HepG2 (cell line): ENCODE measurements at regions of chr2 and their contacts with region 1.

Region 1: GRCh38 chr2:95022309-95023221 is 2.9 kb upstream of the MAL start:
- DNase-seq: peak; percentile 53
- ATAC-seq: peak; percentile 91
- H3K4me3 ChIP-seq: no peak overlapping the region
- H3K27ac ChIP-seq: no peak overlapping the region
- H3K4me1 ChIP-seq: peaks cover 5% of the 10 kb centered on the region; the same call in 1 of the 2 replicates
- H3K27me3 ChIP-seq: peaks cover 26 to 88% of the 10 kb centered on the region in 2 experiments; a peak in 4 of 5 replicates
- CTCF ChIP-seq: peak; percentile 97
- EP300 ChIP-seq: no peak
- POLR2A ChIP-seq: no peak
- RAD21 ChIP-seq: peak; percentile 83

Region 2: GRCh38 chr2:95053543-95053942 is 31.0 kb after region 1 on chr2:
- CTCF ChIA-PET with region 1: interaction called, 17 read pairs
- POLR2A ChIA-PET with region 1: no interaction called
- in situ Hi-C with region 1: no loop called
- intact Hi-C with region 1: loop called (anchors 1 kb)
- DNase-seq: peak; percentile 33
- ATAC-seq: 0 out of 3 replicates have a peak, but pooled peaks have one; percentile 6
- H3K4me3 ChIP-seq: peak overlapping the region in 1 of 3 experiments; percentile 14; a peak in 1 of 6 replicates
- H3K27ac ChIP-seq: no peak overlapping the region
- H3K4me1 ChIP-seq: peaks cover 37% of the 10 kb centered on the region
- H3K27me3 ChIP-seq: peaks cover 10 to 71% of the 10 kb centered on the region in 2 experiments
- CTCF ChIP-seq: peak; percentile 57
- EP300 ChIP-seq: no peak
- POLR2A ChIP-seq: no peak
- RAD21 ChIP-seq: no peak

Region 3: GRCh38 chr2:95076784-95077529 is 54.4 kb after region 1 on chr2:
- CTCF ChIA-PET with region 1: interaction called, 36 read pairs
- POLR2A ChIA-PET with region 1: no interaction called
- in situ Hi-C with region 1: loop called (anchors 10 kb)
- intact Hi-C with region 1: loop called (anchors 1 kb)
- DNase-seq: peak; percentile 70
- ATAC-seq: peak; percentile 92
- H3K4me3 ChIP-seq: peak overlapping the region; percentile 54 to 78 (median 60)
- H3K27ac ChIP-seq: no peak overlapping the region
- H3K4me1 ChIP-seq: peaks cover 37% of the 10 kb centered on the region
- H3K27me3 ChIP-seq: peaks cover 5 to 57% of the 10 kb centered on the region in 2 experiments; a peak in 4 of 5 replicates
- CTCF ChIP-seq: peak; percentile 98
- EP300 ChIP-seq: no peak
- POLR2A ChIP-seq: no peak
- RAD21 ChIP-seq: peak; percentile 73

Region 4: DNA sequence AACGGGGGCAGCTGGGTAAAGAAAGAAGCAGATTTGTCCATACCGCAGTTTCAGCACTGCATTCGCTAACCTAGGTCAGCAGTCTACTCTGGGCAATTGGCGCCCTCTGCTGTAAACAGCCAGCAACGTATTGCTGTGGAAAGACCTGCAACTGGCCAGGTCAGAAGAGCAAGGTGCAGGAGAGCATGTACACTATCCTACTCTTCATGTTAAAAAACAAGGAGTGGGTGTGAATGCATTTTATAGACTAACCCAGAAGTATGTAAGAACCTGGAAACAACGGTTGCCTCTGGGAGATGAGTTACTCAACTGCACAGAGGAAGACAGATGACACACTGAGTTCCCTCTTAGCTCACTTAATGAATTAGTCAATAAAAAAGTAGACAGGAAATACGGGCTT is 92.9 kb after region 1 on chr2:
- CTCF ChIA-PET with region 1: interaction called, 34 read pairs
- POLR2A ChIA-PET with region 1: interaction called, 3 read pairs
- in situ Hi-C with region 1: no loop called
- intact Hi-C with region 1: loop called (anchors 1 kb)
- DNase-seq: peak; percentile 80
- ATAC-seq: peak; percentile 100
- H3K4me3 ChIP-seq: no peak overlapping the region
- H3K27ac ChIP-seq: no peak overlapping the region
- H3K4me1 ChIP-seq: peaks cover 36% of the 10 kb centered on the region
- H3K27me3 ChIP-seq: no peaks in the 10 kb centered on the region
- CTCF ChIP-seq: peak; percentile 97
- EP300 ChIP-seq: no peak
- POLR2A ChIP-seq: no peak
- RAD21 ChIP-seq: peak; percentile 81